ENCODE measurements at regions of chr14 and their contacts with region 1.

Region 1: GRCh38 chr14:96304956-96305355 is 48.9 kb downstream of the BDKRB1 start:
- DNase-seq: no peak
- ATAC-seq: no peak
- H3K4me3 ChIP-seq: no peak overlapping the region
- H3K27ac ChIP-seq: no peak overlapping the region
- H3K4me1 ChIP-seq: no peaks in the 10 kb centered on the region
- H3K27me3 ChIP-seq: no peaks in the 10 kb centered on the region
- CTCF ChIP-seq: no peak

Region 2: DNA sequence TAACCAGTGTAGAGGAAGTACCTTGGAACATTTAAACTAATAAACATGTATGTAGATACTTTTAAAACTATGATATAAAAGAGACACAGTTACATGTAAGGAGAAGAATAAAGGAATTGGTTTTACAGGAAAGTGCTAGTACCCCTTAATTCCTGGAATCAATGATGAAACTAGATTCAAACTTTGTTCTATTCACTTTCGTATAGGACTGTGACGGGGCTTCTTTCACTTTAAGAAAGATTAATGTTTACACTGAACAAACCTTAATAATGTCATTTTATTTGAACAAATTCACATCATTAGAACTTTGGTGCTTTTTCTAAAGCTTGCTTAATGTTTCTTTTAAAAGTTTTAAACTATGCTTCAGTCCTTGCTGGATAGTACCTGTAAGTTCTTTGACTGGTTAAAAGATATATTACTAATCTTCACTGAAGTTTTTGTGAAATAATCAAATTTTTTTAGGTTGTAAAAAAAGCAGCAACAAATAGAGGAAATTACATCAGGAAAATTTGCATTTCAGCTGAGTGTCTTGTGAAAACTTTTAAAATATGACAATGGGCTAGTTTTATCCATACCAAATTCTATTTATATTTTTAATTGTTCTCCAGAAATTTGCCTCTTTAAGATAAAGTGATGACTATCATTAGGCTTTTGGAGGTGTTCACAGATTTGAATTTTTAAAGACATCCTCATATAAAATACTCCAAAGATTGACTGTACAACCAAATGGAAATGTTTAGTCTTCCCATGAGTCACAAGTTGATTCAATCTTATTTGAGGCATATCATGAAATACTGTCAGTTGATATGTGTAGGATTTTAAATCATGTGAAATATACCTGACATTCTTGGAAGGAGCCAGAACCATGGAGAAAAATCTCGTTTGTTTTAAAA is 233.4 kb after region 1 on chr14:
- intact Hi-C with region 1: loop called in 1 of 2 experiments (anchors 10 kb)
- DNase-seq: no peak
- ATAC-seq: no peak
- H3K4me3 ChIP-seq: no peak overlapping the region
- H3K27ac ChIP-seq: no peak overlapping the region
- H3K4me1 ChIP-seq: no peaks in the 10 kb centered on the region
- H3K27me3 ChIP-seq: no peaks in the 10 kb centered on the region
- CTCF ChIP-seq: no peak

Region 3: DNA sequence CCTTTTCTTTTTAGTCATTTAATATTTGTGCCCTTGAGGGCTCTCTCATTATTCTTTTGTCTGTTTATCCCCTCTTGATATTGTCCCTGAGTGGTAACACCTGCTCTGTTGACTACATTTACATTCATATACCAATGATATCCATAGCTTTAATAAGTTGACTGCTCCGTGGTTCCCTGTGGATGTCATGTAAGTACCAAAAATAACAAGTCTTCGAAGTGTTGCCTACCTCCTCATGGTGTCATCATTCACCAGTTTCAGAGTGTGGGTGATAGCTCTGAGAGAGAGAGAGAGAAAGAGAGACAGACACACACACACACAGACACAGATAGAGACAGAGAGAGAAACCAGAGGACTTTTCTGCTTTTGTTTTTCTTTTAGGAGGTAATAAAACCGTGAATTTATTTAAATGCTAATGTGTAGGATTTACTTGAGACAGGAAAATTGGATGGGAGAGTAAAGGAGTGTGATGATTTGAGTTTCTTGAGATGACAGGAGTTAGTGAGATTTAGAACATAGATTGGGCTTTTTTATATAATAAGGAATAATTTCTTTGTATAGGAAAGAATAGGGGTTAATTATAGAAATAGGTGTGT is 249.5 kb after region 1 on chr14:
- intact Hi-C with region 1: loop called in 1 of 2 experiments (anchors 10 kb)
- DNase-seq: no peak
- ATAC-seq: peak in 1 of 4 donors; percentile 36
- H3K4me3 ChIP-seq: no peak overlapping the region
- H3K27ac ChIP-seq: no peak overlapping the region
- H3K4me1 ChIP-seq: no peaks in the 10 kb centered on the region
- H3K27me3 ChIP-seq: no peaks in the 10 kb centered on the region
- CTCF ChIP-seq: no peak

Region 4: GRCh38 chr14:96567289-96567899 is 262.4 kb after region 1 on chr14:
- intact Hi-C with region 1: loop called in 1 of 2 experiments (anchors 10 kb)
- DNase-seq: no peak
- ATAC-seq: peak in 1 of 4 donors; percentile 47
- H3K4me3 ChIP-seq: no peak overlapping the region
- H3K27ac ChIP-seq: no peak overlapping the region
- H3K4me1 ChIP-seq: no peaks in the 10 kb centered on the region
- H3K27me3 ChIP-seq: no peaks in the 10 kb centered on the region
- CTCF ChIP-seq: peak; percentile 47